Left cardiac atrium (tissue), 4 donors: ENCODE measurements at regions of chr13 and their contacts with region 1.

Region 1: DNA sequence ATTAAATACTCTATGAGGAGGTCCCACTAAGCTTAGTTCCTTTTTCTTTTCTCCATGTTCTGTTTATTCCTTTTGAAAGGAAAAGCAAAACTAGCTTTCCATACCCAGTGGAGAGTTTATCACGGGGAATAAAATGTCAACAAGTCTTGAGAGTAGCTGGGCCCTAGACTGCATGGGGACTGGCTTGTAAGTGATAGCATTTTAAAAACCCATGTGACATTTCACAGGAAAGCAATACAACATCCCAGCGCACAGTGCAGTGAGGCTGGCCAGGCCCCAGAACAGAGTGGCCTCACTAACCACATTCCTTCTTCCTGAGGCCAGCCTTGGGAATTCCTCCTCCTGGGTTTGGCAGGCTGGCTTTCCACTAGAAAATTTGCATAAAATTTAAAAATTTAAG is 149.8 kb downstream of the DLEU7 start:
- DNase-seq: peak; percentile 51
- ATAC-seq: peak; percentile 85 to 90

Region 2: GRCh38 chr13:50589139-50589538 is 104.6 kb before region 1 on chr13:
- intact Hi-C with region 1: loop called in 1 of 2 experiments (anchors 10 kb)
- DNase-seq: no peak
- ATAC-seq: peak in 1 of 2 donors; percentile 57